ENCODE measurements at regions of chr1 and their contacts with region 1.

Region 1: DNA sequence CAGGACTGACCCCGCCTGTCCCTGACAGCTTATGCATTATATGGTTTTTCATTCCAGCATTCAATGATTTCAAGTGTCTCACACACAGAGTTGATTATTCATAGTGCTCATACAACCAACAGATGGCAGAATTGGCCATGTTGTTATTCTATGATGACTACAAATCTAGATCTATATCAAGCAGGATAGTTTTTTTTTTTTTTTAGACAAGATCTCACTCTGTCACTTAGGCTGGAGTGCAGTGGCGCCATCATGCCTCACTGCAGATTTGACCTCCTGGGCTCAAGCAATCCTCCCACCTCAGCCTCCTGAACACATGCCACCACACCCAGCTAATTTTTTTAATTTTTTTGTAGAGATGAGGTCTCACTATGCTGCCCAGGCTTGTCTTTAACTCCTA is 40.1 kb upstream of the LRRC8D start:
- DNase-seq: no peak
- ATAC-seq: peak; percentile 71
- H3K4me3 ChIP-seq: no peak overlapping the region
- H3K27ac ChIP-seq: no peak overlapping the region
- H3K4me1 ChIP-seq: peaks cover 13% of the 10 kb centered on the region; the same call in 1 of the 2 replicates
- H3K27me3 ChIP-seq: no peaks in the 10 kb centered on the region
- CTCF ChIP-seq: peak; percentile 25 to 43 (median 34); a peak in 4 of 6 replicates
- EP300 ChIP-seq: no peak
- POLR2A ChIP-seq: no peak
- RAD21 ChIP-seq: peak; percentile 66

Region 2: GRCh38 chr1:89615676-89616598 is 164.8 kb before region 1 on chr1:
- CTCF ChIA-PET with region 1: interaction called, 9 read pairs
- POLR2A ChIA-PET with region 1: interaction called, 5 read pairs
- RAD21 ChIA-PET with region 1: interaction called, 20 read pairs
- SMC1A ChIA-PET with region 1: interaction called, 14 read pairs
- in situ Hi-C with region 1: no loop called
- intact Hi-C with region 1: no loop called
- DNase-seq: no peak
- ATAC-seq: peak; percentile 37
- H3K4me3 ChIP-seq: no peak overlapping the region
- H3K27ac ChIP-seq: no peak overlapping the region
- H3K4me1 ChIP-seq: peaks cover 14% of the 10 kb centered on the region
- H3K27me3 ChIP-seq: no peaks in the 10 kb centered on the region
- CTCF ChIP-seq: peak; percentile 15 to 52 (median 37); a peak in 4 of 6 replicates
- EP300 ChIP-seq: no peak
- POLR2A ChIP-seq: no peak
- RAD21 ChIP-seq: 0 out of 2 replicates have a peak, but pooled peaks have one; percentile 8

Region 3: DNA sequence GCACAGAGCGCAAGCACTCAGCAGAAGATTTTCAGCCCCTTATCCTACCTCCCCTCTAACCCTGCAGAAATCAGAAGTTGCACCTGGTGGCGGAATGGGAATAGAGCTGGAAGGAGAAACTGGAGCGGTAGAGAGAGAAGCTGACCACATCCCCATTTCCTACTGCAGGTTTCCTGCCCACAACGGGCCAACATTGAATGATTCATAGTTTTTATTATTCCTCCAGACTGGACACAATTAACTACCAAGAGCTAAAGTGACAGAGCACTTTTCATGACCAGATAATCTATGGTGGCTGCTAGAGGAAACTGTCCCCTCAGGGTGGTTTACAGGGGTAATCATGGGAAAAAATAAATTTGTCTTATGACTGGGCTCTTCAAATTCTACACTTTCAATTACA is 18.8 kb after region 1 on chr1:
- CTCF ChIA-PET with region 1: interaction called, 16 read pairs
- POLR2A ChIA-PET with region 1: no interaction called
- RAD21 ChIA-PET with region 1: interaction called, 8 read pairs
- SMC1A ChIA-PET with region 1: interaction called, 52 read pairs
- in situ Hi-C with region 1: no loop called
- intact Hi-C with region 1: no loop called
- DNase-seq: no peak
- ATAC-seq: peak; percentile 24; the same call in 2 of the 3 replicates
- H3K4me3 ChIP-seq: no peak overlapping the region
- H3K27ac ChIP-seq: no peak overlapping the region
- H3K4me1 ChIP-seq: peaks cover 13% of the 10 kb centered on the region
- H3K27me3 ChIP-seq: no peaks in the 10 kb centered on the region
- CTCF ChIP-seq: no peak
- EP300 ChIP-seq: no peak
- POLR2A ChIP-seq: no peak
- RAD21 ChIP-seq: no peak

Region 4: DNA sequence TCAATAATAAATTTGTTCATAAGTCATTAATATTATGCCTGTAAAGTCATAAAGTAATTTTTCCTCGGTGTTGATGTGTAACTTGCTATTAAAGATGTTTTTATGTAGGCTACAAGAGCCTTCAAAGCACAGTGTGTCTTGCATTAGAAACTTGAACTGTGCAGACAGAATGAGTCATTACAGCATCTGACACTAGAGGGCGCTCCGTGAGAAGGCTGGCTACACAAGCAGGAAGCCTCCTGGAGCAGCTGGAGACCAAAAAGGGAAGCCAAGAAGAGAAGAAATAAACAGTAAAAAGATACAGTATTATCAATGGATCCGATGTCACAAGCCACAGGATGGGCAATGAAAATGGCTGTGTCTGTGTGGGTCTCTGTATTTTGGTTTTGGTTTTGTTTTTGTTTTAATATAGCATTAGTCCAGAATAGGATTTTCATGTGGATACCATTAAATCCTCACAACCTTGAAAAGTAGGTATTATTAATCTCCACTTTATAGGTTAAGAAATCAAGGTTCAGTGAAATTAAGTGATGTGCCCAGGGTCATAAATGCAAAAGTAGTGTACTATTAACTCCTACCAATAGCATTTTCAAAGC is 24.0 kb after region 1 on chr1:
- CTCF ChIA-PET with region 1: interaction called, 16 read pairs
- POLR2A ChIA-PET with region 1: interaction called, 4 read pairs
- RAD21 ChIA-PET with region 1: interaction called, 8 read pairs
- SMC1A ChIA-PET with region 1: interaction called, 52 read pairs
- in situ Hi-C with region 1: no loop called
- intact Hi-C with region 1: no loop called
- DNase-seq: peak; percentile 69
- ATAC-seq: peak; percentile 94
- H3K4me3 ChIP-seq: no peak overlapping the region
- H3K27ac ChIP-seq: no peak overlapping the region
- H3K4me1 ChIP-seq: peaks cover 10% of the 10 kb centered on the region
- H3K27me3 ChIP-seq: no peaks in the 10 kb centered on the region; a peak in 1 of 4 replicates
- CTCF ChIP-seq: peak; percentile 86 to 96 (median 88)
- EP300 ChIP-seq: no peak
- POLR2A ChIP-seq: no peak
- RAD21 ChIP-seq: peak; percentile 99

Region 5: GRCh38 chr1:89815611-89816010 is 34.9 kb after region 1 on chr1:
- CTCF ChIA-PET with region 1: interaction called, 4 read pairs
- POLR2A ChIA-PET with region 1: interaction called, 3 read pairs
- RAD21 ChIA-PET with region 1: interaction called, 12 read pairs
- SMC1A ChIA-PET with region 1: interaction called, 7 read pairs
- in situ Hi-C with region 1: no loop called
- intact Hi-C with region 1: no loop called
- DNase-seq: peak; percentile 50
- ATAC-seq: peak; percentile 81
- H3K4me3 ChIP-seq: no peak overlapping the region
- H3K27ac ChIP-seq: no peak overlapping the region
- H3K4me1 ChIP-seq: peaks cover 15% of the 10 kb centered on the region
- H3K27me3 ChIP-seq: no peaks in the 10 kb centered on the region
- CTCF ChIP-seq: no peak
- EP300 ChIP-seq: peak in 1 of 2 experiments; percentile 18; a peak in 1 of 4 replicates
- POLR2A ChIP-seq: no peak
- RAD21 ChIP-seq: no peak

Region 6: DNA sequence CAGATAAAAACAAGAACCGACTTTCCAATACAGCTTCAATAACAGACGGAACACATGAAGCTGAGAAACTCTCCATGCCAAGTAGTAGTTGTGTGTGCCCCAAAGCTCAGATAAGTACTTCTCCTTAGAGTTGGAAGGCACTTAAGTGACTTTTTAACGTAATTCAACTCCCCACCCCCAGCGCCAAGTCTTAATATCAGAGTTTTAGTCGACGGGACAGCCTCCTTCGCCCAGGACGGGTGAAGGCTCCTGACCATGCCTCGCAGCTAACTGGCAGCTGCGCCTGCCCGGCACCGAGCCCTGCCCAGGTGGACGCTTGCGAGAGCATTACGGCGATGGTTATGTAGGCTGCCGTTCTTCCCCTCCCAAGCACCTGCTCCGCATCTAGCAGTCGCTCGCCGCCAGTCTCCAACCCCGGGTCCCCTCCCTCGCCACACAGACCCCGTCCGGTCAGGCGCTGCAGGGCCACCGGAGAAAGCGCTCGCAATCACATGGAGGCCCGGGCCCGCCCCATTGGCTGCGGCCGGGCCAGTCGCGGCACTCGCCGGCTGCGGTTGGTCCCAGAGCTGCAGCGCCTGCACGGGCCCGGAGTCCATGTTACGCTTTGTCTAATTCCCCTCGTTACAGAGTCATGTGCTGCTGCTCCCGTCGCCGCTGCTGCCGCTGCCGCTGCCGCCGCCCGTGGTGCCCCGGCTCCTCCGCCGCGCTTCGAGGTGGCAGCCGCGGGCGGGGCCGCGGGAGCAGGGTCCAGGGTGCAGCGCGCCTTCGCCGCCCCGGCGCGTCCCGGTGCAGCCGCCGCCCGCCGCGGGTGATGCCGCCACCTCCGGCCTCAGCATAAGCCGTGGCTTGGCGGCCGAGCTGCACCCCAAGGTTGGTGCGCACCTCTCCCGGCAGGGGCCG is 40.0 kb after region 1 on chr1 and contains the start of gene LRRC8D:
- CTCF ChIA-PET with region 1: interaction called, 6 read pairs
- POLR2A ChIA-PET with region 1: interaction called, 4 read pairs
- RAD21 ChIA-PET with region 1: interaction called, 12 read pairs
- SMC1A ChIA-PET with region 1: interaction called, 15 read pairs
- in situ Hi-C with region 1: no loop called
- intact Hi-C with region 1: no loop called
- DNase-seq: no peak
- ATAC-seq: peak; percentile 86
- H3K4me3 ChIP-seq: peak within 1 kb of the TSS; percentile 71
- H3K27ac ChIP-seq: peak within 1 kb of the TSS; percentile 71
- H3K4me1 ChIP-seq: peaks cover 18% of the 10 kb centered on the region
- H3K27me3 ChIP-seq: no peaks in the 10 kb centered on the region
- CTCF ChIP-seq: no peak
- EP300 ChIP-seq: no peak
- POLR2A ChIP-seq: peak; percentile 84
- RAD21 ChIP-seq: no peak
- polyA plus RNA-seq, gene LRRC8D: 5.6 to 6.4 TPM

Region 7: DNA sequence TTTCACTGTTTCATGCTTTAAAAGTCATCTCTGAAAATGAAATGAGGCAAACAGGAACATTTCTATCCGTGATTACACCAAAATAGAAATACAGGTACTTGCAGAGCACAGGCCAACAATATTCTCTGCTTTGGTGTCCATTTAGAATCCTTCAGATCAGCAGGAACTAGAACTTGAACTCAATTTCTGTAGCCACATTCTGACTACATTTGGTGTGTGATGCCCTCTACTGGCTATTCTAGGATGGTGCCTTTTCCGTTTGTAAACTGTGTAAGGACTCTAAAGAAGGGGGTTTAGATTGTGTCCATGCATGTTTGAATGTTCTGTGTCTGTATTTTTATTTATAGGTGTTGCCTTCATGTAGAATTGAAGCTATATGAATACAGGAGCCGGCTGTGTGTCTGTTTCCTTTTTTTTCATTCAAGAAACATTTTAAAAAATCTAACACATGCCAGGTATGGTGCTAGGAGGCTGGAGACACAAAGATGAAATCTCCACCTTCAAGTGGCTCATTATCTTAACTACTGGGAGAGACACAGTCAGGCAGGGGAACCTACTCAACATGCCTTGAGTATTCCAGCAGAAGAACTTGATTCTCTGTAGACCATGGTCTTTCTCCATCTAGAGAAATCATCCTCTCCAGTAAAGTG is 206.6 kb after region 1 on chr1:
- CTCF ChIA-PET with region 1: interaction called, 32 read pairs
- POLR2A ChIA-PET with region 1: interaction called, 5 read pairs
- RAD21 ChIA-PET with region 1: interaction called, 23 read pairs
- SMC1A ChIA-PET with region 1: interaction called, 10 read pairs
- in situ Hi-C with region 1: no loop called
- intact Hi-C with region 1: loop called (anchors 1 kb)
- DNase-seq: peak; percentile 45
- ATAC-seq: peak; percentile 94
- H3K4me3 ChIP-seq: no peak overlapping the region
- H3K27ac ChIP-seq: no peak overlapping the region
- H3K4me1 ChIP-seq: no peaks in the 10 kb centered on the region
- H3K27me3 ChIP-seq: no peaks in the 10 kb centered on the region
- CTCF ChIP-seq: peak; percentile 78 to 92 (median 88); a peak in 5 of 6 replicates
- EP300 ChIP-seq: no peak
- POLR2A ChIP-seq: no peak
- RAD21 ChIP-seq: peak; percentile 98

Region 8: GRCh38 chr1:90417126-90417525 is 636.4 kb after region 1 on chr1:
- CTCF ChIA-PET with region 1: no interaction called
- POLR2A ChIA-PET with region 1: no interaction called
- RAD21 ChIA-PET with region 1: no interaction called
- SMC1A ChIA-PET with region 1: no interaction called
- in situ Hi-C with region 1: no loop called
- intact Hi-C with region 1: no loop called
- DNase-seq: no peak
- ATAC-seq: no peak
- H3K4me3 ChIP-seq: no peak overlapping the region
- H3K27ac ChIP-seq: no peak overlapping the region
- H3K4me1 ChIP-seq: no peaks in the 10 kb centered on the region
- H3K27me3 ChIP-seq: no peaks in the 10 kb centered on the region
- CTCF ChIP-seq: no peak
- EP300 ChIP-seq: no peak
- POLR2A ChIP-seq: no peak
- RAD21 ChIP-seq: no peak